ENCODE measurements at regions of chr16 and their contacts with region 1.

Region 1: GRCh38 chr16:11407047-11407982 is 62.1 kb downstream of the RMI2 start:
- DNase-seq: peak; percentile 78
- ATAC-seq: peak; percentile 54
- H3K4me3 ChIP-seq: no peak overlapping the region
- H3K27ac ChIP-seq: no peak overlapping the region
- H3K4me1 ChIP-seq: peaks cover 11% of the 10 kb centered on the region
- H3K27me3 ChIP-seq: peaks cover 17 to 29% of the 10 kb centered on the region in 2 experiments; a peak in 4 of 5 replicates
- CTCF ChIP-seq: peak; percentile 96
- EP300 ChIP-seq: no peak
- POLR2A ChIP-seq: no peak
- RAD21 ChIP-seq: peak; percentile 91

Region 2: GRCh38 chr16:10964039-10964890 is 443.1 kb before region 1 on chr16:
- CTCF ChIA-PET with region 1: interaction called, 12 read pairs
- POLR2A ChIA-PET with region 1: no interaction called
- in situ Hi-C with region 1: no loop called
- intact Hi-C with region 1: no loop called
- DNase-seq: peak; percentile 74
- ATAC-seq: peak; percentile 96
- H3K4me3 ChIP-seq: no peak overlapping the region
- H3K27ac ChIP-seq: no peak overlapping the region
- H3K4me1 ChIP-seq: peaks cover 14% of the 10 kb centered on the region
- H3K27me3 ChIP-seq: no peaks in the 10 kb centered on the region
- CTCF ChIP-seq: peak; percentile 99
- EP300 ChIP-seq: peak in 1 of 2 experiments; percentile 52; a peak in 1 of 4 replicates
- POLR2A ChIP-seq: no peak
- RAD21 ChIP-seq: peak; percentile 97

Region 3: DNA sequence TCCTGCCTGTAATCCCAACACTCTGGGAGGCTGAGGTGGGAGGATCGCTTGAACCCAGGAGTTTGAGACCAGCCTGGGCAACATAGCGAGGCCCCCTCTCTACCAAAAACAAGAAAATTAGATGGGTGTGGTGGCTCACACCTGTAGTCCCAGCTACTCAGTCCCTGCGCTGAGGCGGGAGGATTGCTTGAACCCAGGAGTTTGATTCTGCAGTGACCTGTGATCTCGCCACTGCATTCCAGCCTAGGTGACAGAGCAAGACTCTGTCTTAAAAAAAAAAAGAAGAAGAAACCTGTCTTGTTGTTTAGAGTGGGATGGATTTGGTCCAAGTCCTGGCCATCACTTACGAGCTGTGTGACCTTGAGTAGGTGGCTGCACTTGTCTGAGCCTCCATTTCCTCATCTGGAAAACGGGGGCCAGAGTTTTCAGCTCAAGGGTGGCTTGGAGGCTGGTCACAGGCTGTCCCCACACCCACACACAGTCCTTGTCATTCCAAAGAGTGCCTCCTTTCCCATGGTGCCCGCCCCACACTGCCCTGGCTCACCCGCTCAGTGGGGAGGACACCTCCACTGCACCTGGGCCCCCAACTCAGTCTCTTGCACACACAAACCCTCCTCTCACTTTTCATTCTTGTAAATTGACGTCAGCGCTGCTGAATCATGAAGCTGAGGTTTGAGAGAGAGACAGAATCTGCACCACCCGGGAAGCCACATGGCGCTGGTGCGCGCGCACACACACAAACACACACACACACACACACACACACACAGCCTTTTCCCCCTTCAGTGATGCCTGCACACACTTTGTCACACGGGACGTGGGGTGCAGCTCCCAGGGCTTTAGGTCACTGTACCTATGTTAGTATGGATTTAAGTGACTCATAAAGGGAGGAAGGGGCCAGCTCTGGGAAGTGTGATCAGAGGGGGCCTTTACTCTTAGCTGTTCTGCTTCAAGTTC is 155.5 kb before region 1 on chr16:
- CTCF ChIA-PET with region 1: no interaction called
- POLR2A ChIA-PET with region 1: no interaction called
- in situ Hi-C with region 1: no loop called
- intact Hi-C with region 1: no loop called
- DNase-seq: no peak
- ATAC-seq: no peak
- H3K4me3 ChIP-seq: no peak overlapping the region
- H3K27ac ChIP-seq: no peak overlapping the region
- H3K4me1 ChIP-seq: peaks cover 60% of the 10 kb centered on the region
- H3K27me3 ChIP-seq: no peaks in the 10 kb centered on the region; a peak in 1 of 5 replicates
- CTCF ChIP-seq: no peak
- EP300 ChIP-seq: no peak
- POLR2A ChIP-seq: peak in 1 of 2 experiments; percentile 6; a peak in 1 of 4 replicates
- RAD21 ChIP-seq: no peak

Region 4: GRCh38 chr16:11386791-11387546 is 20.3 kb before region 1 on chr16:
- CTCF ChIA-PET with region 1: no interaction called
- POLR2A ChIA-PET with region 1: no interaction called
- in situ Hi-C with region 1: no loop called
- intact Hi-C with region 1: no loop called
- DNase-seq: peak; percentile 74
- ATAC-seq: peak; percentile 89
- H3K4me3 ChIP-seq: peak overlapping the region; percentile 4 to 56 (median 15); a peak in 3 of 6 replicates
- H3K27ac ChIP-seq: no peak overlapping the region
- H3K4me1 ChIP-seq: peaks cover 45% of the 10 kb centered on the region
- H3K27me3 ChIP-seq: peaks cover 36 to 85% of the 10 kb centered on the region in 2 experiments
- CTCF ChIP-seq: peak; percentile 91
- EP300 ChIP-seq: no peak
- POLR2A ChIP-seq: no peak
- RAD21 ChIP-seq: peak; percentile 90

Region 5: GRCh38 chr16:11506741-11507305 is 99.5 kb after region 1 on chr16:
- CTCF ChIA-PET with region 1: interaction called, 5 read pairs
- POLR2A ChIA-PET with region 1: no interaction called
- in situ Hi-C with region 1: loop called (anchors 25 kb)
- intact Hi-C with region 1: loop called (anchors 1 kb)
- DNase-seq: no peak
- ATAC-seq: peak; percentile 72
- H3K4me3 ChIP-seq: no peak overlapping the region
- H3K27ac ChIP-seq: no peak overlapping the region
- H3K4me1 ChIP-seq: peaks cover 6% of the 10 kb centered on the region; the same call in 1 of the 2 replicates
- H3K27me3 ChIP-seq: peaks cover 2 to 8% of the 10 kb centered on the region in 2 experiments; a peak in 4 of 5 replicates
- CTCF ChIP-seq: peak; percentile 34; the same call in 1 of the 2 replicates
- EP300 ChIP-seq: no peak
- POLR2A ChIP-seq: no peak
- RAD21 ChIP-seq: 0 out of 2 replicates have a peak, but pooled peaks have one; percentile 30

Region 6: DNA sequence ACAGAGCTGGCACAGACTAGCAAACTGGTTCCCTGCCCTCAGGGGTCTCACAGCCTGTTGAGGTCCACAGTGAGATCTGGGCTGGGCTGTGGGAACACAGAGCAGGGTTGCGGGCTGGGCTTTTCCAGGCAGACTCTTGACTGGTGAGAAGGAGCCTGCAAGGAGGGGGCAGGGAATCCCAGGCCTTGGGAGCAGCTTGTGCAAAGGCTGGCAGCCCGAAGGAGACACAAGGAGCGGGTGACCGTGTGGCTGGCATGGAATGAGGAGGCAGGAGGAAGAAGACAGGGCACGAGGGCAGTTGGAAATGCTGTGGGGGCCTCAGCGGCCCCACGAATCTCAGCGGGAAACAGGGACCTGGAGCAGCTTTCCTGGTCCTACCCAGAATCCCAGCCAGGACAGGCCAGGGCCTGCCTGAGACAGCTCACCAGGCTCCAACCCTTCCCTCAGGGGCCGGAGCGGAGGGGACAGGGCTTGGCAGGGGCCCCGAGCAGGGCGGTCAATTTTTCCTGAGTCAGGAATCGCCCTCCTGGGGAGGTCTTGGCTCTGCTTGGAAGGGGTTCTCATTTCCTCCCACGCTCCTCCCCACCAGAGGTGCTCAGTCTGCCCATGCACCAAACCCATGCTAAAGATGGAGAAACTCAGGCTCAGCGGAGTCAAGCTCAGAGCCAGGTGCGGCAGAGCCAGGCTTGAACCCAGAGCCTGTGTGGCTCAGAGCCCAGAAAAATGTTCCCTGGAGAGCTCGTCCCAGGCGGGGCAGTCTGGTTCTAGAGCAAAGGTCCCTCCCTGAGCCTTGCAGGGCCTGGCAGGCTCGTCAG is 251.8 kb after region 1 on chr16:
- CTCF ChIA-PET with region 1: no interaction called
- POLR2A ChIA-PET with region 1: no interaction called
- in situ Hi-C with region 1: no loop called
- intact Hi-C with region 1: loop called (anchors 5 kb)
- DNase-seq: no peak
- ATAC-seq: peak; percentile 46
- H3K4me3 ChIP-seq: no peak overlapping the region
- H3K27ac ChIP-seq: no peak overlapping the region
- H3K4me1 ChIP-seq: peaks cover 21% of the 10 kb centered on the region
- H3K27me3 ChIP-seq: peaks cover 6 to 54% of the 10 kb centered on the region in 2 experiments
- CTCF ChIP-seq: no peak
- EP300 ChIP-seq: no peak
- POLR2A ChIP-seq: no peak
- RAD21 ChIP-seq: no peak

Region 7: GRCh38 chr16:11806721-11807120 is 399.4 kb after region 1 on chr16:
- CTCF ChIA-PET with region 1: no interaction called
- POLR2A ChIA-PET with region 1: no interaction called
- in situ Hi-C with region 1: loop called (anchors 5 kb)
- intact Hi-C with region 1: loop called (anchors 5 kb)
- DNase-seq: no peak
- ATAC-seq: no peak
- H3K4me3 ChIP-seq: no peak overlapping the region
- H3K27ac ChIP-seq: no peak overlapping the region
- H3K4me1 ChIP-seq: peaks cover 28% of the 10 kb centered on the region
- H3K27me3 ChIP-seq: no peaks in the 10 kb centered on the region; a peak in 1 of 5 replicates
- CTCF ChIP-seq: no peak
- EP300 ChIP-seq: no peak
- POLR2A ChIP-seq: no peak
- RAD21 ChIP-seq: no peak

Measured in HepG2 (cell line).